ENCODE measurements at regions of chr16 and their contacts with region 1.

Region 1: GRCh38 chr16:9713156-9713555 is 469.1 kb downstream of the GRIN2A start:
- DNase-seq: no peak
- ATAC-seq: no peak
- H3K4me3 ChIP-seq: no peak overlapping the region
- H3K27ac ChIP-seq: no peak overlapping the region
- H3K4me1 ChIP-seq: no peaks in the 10 kb centered on the region
- H3K27me3 ChIP-seq: no peaks in the 10 kb centered on the region
- CTCF ChIP-seq: no peak

Region 2: DNA sequence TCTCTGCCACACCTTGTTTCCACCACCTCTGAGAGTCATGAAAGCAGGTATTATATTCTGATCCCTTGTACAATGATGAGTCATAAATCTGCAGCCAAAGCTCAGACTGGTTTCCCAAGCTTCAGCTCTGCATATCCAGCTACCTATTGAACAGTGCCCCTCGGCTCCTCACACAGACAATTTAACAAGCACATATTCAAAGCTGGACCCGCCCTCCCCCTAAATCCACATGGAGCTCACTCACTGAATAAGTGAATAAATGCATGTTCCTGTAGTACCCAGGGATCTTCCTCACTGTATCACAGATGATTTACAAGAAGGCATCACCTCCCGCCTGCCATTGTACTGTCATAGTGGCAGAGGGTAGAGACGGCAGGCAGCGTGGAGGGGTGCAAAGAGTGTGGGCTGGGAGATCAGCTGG is 47.3 kb before region 1 on chr16:
- intact Hi-C with region 1: loop called in 1 of 2 experiments (anchors 10 kb)
- DNase-seq: no peak
- ATAC-seq: no peak
- H3K4me3 ChIP-seq: no peak overlapping the region
- H3K27ac ChIP-seq: no peak overlapping the region
- H3K4me1 ChIP-seq: no peaks in the 10 kb centered on the region
- H3K27me3 ChIP-seq: peaks cover 0 to 3% (median 3%) of the 10 kb centered on the region in 3 donors
- CTCF ChIP-seq: no peak

Region 3: DNA sequence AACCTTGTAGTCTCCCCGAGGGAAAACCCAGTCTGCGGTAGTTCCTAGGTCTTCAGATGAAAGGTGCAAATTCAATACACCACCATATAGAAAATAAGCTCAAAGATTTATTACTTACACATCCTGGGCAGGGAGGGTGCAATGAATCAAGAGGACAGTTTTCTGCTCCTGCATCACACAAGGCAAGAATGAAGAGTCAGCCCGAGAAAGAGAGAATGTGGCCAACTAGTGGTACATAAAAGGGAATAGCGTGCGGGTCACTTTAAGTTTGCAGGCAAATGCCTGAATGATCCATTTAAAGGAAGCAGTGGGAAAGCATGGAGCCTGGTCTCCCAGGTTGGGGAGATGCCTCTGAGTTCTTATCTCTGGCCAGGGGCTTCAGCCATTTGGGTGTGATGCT is 65.7 kb after region 1 on chr16:
- intact Hi-C with region 1: no loop called
- DNase-seq: no peak
- ATAC-seq: no peak
- H3K4me3 ChIP-seq: no peak overlapping the region
- H3K27ac ChIP-seq: no peak overlapping the region
- H3K4me1 ChIP-seq: no peaks in the 10 kb centered on the region
- H3K27me3 ChIP-seq: peaks cover 0 to 5% (median 0%) of the 10 kb centered on the region in 3 donors
- CTCF ChIP-seq: no peak

Measured in psoas muscle (tissue), 8 donors.